Mammary epithelial cell (primary cell): ENCODE measurements at regions of chr18 and their contacts with region 1.

Region 1: GRCh38 chr18:44679056-44679905 is 1.4 kb upstream of the SETBP1 start:
- DNase-seq: peak; percentile 80
- H3K4me3 ChIP-seq: peak overlapping the region; percentile 78 to 95 (median 90)
- H3K27ac ChIP-seq: peak overlapping the region; percentile 63
- H3K4me1 ChIP-seq: peaks cover 30% of the 10 kb centered on the region
- H3K27me3 ChIP-seq: no peaks in the 10 kb centered on the region
- CTCF ChIP-seq: peak; percentile 60 to 69

Region 2: DNA sequence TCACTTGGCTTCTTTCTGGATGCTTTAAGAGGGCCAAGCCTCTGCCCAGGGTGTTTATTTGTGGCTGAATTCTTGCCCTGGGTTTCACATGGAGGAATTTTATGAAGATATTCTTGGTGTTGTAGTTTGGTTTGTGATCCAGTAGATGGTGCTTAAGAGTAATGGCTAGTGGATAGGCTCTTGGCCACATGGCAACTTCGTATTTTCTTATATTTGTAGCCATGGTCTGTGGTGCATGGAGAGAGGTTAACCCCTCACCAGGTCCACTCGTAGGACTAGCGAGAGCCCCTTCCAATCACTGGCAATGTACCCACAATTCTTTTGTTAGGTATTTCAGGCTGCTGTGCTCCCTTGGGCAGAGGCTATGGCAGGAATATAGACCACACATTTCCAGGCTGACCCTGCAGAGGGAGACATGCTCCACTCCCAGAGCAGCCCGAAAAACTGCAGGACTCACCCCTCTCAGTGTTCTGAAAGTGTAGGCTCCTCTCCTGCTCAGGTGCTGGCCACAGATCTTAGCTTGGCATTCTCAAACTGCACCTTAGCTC is 580.7 kb before region 1 on chr18:
- CTCF ChIA-PET with region 1: interaction called, 3 read pairs
- dilution Hi-C with region 1: no loop called
- in situ Hi-C with region 1: no loop called
- intact Hi-C with region 1: loop called (anchors 1 kb)
- DNase-seq: peak; percentile 56
- H3K4me3 ChIP-seq: no peak overlapping the region
- H3K27ac ChIP-seq: no peak overlapping the region
- H3K4me1 ChIP-seq: no peaks in the 10 kb centered on the region
- H3K27me3 ChIP-seq: no peaks in the 10 kb centered on the region
- CTCF ChIP-seq: peak; percentile 40 to 54

Region 3: DNA sequence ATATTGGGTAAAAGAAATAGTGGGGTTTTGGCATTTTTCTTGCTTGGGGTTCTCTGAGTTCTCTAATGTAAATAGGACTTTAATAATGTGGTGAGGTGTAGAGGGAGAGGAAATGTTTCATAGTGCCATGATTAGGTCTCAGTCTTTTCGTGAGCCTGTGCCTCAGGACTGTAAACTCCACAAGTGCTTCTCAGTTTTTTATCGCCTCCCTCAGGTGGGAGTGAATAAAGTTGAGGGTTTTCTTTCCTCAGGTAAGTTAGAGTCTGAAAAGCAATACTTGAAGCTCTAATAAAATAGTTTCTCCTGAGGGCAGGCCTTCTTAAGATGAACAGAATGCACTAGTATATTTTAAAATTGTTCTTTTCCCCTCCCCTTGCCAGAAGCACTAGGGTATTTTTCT is 241.7 kb before region 1 on chr18:
- CTCF ChIA-PET with region 1: no interaction called
- dilution Hi-C with region 1: no loop called
- in situ Hi-C with region 1: no loop called
- intact Hi-C with region 1: loop called (anchors 5 kb)
- DNase-seq: no peak
- H3K4me3 ChIP-seq: no peak overlapping the region
- H3K27ac ChIP-seq: no peak overlapping the region
- H3K4me1 ChIP-seq: no peaks in the 10 kb centered on the region
- H3K27me3 ChIP-seq: no peaks in the 10 kb centered on the region
- CTCF ChIP-seq: no peak

Region 4: DNA sequence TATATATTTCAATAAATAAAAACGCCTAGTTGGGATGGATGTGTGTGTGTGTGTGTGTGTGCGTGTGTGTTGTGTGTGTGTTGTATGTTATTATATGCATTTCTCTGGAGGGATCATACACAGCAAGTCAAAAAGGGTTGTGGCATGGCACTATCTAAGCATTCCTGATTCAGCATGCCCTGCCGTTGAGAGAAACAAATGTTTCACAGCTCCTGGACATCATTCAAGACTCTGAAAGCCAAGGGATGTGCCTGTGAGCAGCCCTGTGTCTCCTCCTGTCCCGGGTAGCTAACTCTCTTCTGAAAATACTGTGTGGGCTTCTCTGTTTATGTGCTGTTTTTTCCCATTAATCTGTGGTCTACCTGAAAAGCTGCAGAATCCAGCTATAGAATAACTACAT is 196.5 kb before region 1 on chr18:
- CTCF ChIA-PET with region 1: no interaction called
- dilution Hi-C with region 1: no loop called
- in situ Hi-C with region 1: no loop called
- intact Hi-C with region 1: no loop called
- DNase-seq: no peak
- H3K4me3 ChIP-seq: no peak overlapping the region
- H3K27ac ChIP-seq: no peak overlapping the region
- H3K4me1 ChIP-seq: no peaks in the 10 kb centered on the region
- H3K27me3 ChIP-seq: no peaks in the 10 kb centered on the region
- CTCF ChIP-seq: no peak

Region 5: DNA sequence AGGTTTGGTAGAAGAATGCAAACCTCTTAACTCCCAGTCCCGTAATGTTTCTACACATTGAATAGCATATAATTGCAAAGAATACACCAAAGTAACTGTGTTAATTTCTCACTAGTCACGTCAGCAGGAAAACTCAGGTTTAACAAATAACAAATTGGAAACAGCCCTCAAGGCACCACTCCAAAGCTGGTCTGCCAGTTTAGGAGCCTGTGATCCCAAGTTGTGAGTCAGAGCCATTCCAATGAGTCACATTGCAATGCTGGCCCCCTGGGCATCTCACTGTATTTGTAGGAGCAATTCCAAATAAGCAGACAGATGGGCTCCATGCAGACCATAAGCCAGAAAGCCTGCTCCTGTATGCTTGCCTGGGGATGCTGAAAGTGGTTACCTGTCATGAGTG is 141.8 kb before region 1 on chr18:
- CTCF ChIA-PET with region 1: no interaction called
- dilution Hi-C with region 1: no loop called
- in situ Hi-C with region 1: no loop called
- intact Hi-C with region 1: no loop called
- DNase-seq: peak; percentile 89
- H3K4me3 ChIP-seq: no peak overlapping the region
- H3K27ac ChIP-seq: no peak overlapping the region
- H3K4me1 ChIP-seq: peaks cover 23% of the 10 kb centered on the region
- H3K27me3 ChIP-seq: no peaks in the 10 kb centered on the region
- CTCF ChIP-seq: no peak

Region 6: DNA sequence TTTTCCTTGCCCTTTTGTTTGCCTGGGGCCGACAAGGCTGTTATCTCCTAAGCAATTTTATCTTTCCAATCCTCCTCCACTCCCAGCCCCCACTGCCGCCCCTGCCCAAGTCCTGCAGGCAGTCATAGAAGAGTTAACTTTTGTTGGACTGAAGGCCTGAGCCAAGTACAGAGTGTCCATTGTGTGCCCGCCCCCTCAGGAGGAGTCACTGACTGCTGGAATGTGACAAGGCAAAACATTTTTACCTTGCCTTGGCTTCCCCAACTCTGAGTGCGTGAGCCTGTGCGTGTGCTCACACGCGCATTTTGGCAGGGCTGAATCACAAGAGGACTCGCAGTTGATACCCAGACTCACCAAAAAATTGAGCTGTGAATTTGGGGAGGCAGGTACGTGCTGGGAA is 17.6 kb after region 1 on chr18:
- CTCF ChIA-PET with region 1: interaction called, 7 read pairs
- dilution Hi-C with region 1: no loop called
- in situ Hi-C with region 1: no loop called
- intact Hi-C with region 1: loop called (anchors 2 kb)
- DNase-seq: peak; percentile 70
- H3K4me3 ChIP-seq: peak overlapping the region; percentile 27 to 58 (median 47)
- H3K27ac ChIP-seq: peak overlapping the region; percentile 67
- H3K4me1 ChIP-seq: peaks cover 90% of the 10 kb centered on the region
- H3K27me3 ChIP-seq: no peaks in the 10 kb centered on the region
- CTCF ChIP-seq: no peak

Region 7: GRCh38 chr18:44818668-44819403 is 139.6 kb after region 1 on chr18:
- CTCF ChIA-PET with region 1: no interaction called
- dilution Hi-C with region 1: no loop called
- in situ Hi-C with region 1: no loop called
- intact Hi-C with region 1: no loop called
- DNase-seq: no peak
- H3K4me3 ChIP-seq: no peak overlapping the region
- H3K27ac ChIP-seq: no peak overlapping the region
- H3K4me1 ChIP-seq: peaks cover 8% of the 10 kb centered on the region
- H3K27me3 ChIP-seq: no peaks in the 10 kb centered on the region
- CTCF ChIP-seq: no peak

Region 8: DNA sequence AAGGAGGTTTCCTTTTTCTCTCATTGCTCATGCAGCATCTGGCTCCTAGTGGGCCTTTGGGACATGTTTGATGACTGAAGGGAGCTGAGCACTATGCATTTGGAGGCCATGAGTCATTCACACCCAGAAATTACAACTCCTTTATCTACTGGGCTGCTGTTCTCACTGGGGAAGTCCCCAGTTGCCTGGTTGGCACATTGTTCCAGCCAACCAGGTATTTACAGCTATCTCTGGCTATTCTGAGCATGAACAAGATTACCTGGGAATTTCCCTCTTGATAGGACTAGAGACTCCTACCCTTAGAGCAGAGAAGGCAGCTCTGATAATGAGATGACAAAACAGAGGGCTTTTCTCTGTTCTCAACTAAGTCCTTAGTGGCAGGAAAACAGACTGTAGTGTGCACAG is 207.9 kb after region 1 on chr18:
- CTCF ChIA-PET with region 1: no interaction called
- dilution Hi-C with region 1: no loop called
- in situ Hi-C with region 1: loop called (anchors 10 kb)
- intact Hi-C with region 1: no loop called
- DNase-seq: peak; percentile 96
- H3K4me3 ChIP-seq: no peak overlapping the region
- H3K27ac ChIP-seq: peak overlapping the region; percentile 34
- H3K4me1 ChIP-seq: peaks cover 17% of the 10 kb centered on the region
- H3K27me3 ChIP-seq: no peaks in the 10 kb centered on the region
- CTCF ChIP-seq: peak in 1 of 2 donors; percentile 31

Region 9: DNA sequence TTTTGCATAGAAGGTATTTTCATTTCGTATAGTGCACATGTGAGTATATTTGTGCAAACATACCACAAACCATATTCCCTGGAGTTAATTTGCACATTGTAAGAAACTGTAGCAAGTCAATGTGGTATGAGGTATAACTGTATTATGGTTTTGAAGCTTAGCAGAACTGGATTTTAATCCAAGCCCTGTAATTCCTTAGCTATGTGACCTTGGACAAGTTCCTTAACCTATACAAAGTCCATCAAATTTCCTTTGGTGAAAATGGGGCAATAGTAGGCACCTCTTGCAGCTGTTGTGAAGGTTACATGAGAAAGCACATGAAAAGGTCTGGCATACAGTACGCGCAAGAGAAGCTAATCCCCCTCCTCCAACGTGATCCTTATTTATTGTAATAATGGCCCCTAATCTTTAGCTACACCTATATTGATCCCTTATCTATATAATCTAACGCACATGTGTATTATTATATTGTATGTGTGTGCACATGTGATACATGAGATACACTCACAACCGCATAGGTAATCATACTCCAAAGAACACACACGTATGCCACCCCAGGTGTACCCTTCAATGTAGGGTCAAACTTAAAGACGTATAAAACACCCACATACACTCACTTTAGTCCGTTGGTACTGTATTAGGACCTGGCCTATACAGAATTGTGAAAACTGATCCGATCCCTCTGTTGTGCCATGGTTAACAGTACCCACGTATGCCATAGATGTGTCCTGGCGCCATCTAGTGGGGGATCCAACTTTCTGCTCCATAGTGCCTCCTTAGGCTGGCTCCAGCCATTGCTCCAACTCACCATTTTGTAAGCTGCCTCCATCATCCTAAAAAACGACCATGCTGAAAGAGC is 533.1 kb after region 1 on chr18:
- CTCF ChIA-PET with region 1: interaction called, 33 read pairs
- dilution Hi-C with region 1: no loop called
- in situ Hi-C with region 1: loop called (anchors 25 kb)
- intact Hi-C with region 1: loop called (anchors 1 kb)
- DNase-seq: peak; percentile 63
- H3K4me3 ChIP-seq: no peak overlapping the region
- H3K27ac ChIP-seq: no peak overlapping the region
- H3K4me1 ChIP-seq: no peaks in the 10 kb centered on the region
- H3K27me3 ChIP-seq: no peaks in the 10 kb centered on the region
- CTCF ChIP-seq: peak; percentile 100